Mammary epithelial cell (primary cell): ENCODE measurements at regions of chr9 and their contacts with region 1.

Region 1: DNA sequence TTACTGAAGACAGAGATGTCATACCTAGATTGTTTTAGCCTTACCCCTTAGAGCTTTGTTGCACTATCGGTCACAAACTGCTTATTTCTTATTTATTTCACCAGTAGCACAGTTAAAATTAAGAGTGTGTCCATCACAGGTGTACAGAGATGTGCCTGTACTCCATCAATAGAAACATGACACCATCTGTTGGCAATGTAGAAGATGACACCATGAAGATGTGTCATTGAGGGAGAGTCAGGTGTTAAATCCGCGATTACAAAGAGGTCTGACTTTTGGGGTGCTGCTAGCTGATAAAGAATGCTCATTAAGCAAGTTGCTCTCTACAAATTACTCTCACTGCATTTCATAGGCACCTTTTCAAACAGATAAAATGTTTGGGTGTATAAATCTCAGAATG is 164.4 kb downstream of the SMARCA2 start:
- DNase-seq: peak; percentile 44
- H3K4me3 ChIP-seq: no peak overlapping the region
- H3K27ac ChIP-seq: no peak overlapping the region
- H3K4me1 ChIP-seq: no peaks in the 10 kb centered on the region
- H3K27me3 ChIP-seq: no peaks in the 10 kb centered on the region
- CTCF ChIP-seq: no peak

Region 2: DNA sequence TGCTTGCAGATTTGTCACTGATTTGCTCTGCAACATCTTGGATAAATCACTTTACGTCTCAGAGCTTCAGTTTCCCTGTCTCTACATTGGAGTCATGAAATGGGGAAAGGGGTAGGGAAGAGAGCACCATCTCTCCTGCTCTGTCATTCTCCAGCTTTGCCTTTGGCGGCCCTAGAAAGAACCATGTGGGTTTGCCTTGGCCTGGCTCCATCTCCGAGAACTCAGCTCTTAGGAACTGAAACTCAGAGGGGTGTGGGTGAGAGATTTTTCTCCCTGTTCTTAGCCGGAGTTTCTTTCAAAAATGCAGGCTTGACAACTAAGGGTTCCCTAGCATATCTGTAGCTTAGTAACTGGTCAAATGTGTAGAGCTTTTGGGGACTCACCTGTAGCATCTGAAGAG is 40.9 kb before region 1 on chr9:
- CTCF ChIA-PET with region 1: interaction called, 21 read pairs
- dilution Hi-C with region 1: no loop called
- in situ Hi-C with region 1: no loop called
- intact Hi-C with region 1: no loop called
- DNase-seq: no peak
- H3K4me3 ChIP-seq: no peak overlapping the region
- H3K27ac ChIP-seq: no peak overlapping the region
- H3K4me1 ChIP-seq: peaks cover under 1% of the 10 kb centered on the region
- H3K27me3 ChIP-seq: no peaks in the 10 kb centered on the region
- CTCF ChIP-seq: no peak